ENCODE measurements at regions of chr21 and their contacts with region 1.

Region 1: GRCh38 chr21:19833082-19833481 is 1165.1 kb upstream of the NCAM2 start:
- DNase-seq: no peak

Region 2: GRCh38 chr21:20404915-20405314 is 571.8 kb after region 1 on chr21:
- intact Hi-C with region 1: loop called in 1 of 2 experiments (anchors 5 kb)
- DNase-seq: no peak

Measured in posterior vena cava (tissue), 2 donors.